Activated T-helper 2 cell treated with anti-CD3 and anti-CD28 coated beads, Interferon-gamma antibody, Interleukin-2, Interleukin-4, amounts not matched to agents 10 μg/mL and 5 μg/mL and 100 μg/mL, durations not matched to agents 14 hours and 24 hours and 36 hours (primary cell): ENCODE measurements at regions of chr18 and their contacts with region 1.

Region 1: GRCh38 chr18:49728542-49728941 is 84.8 kb downstream of the ACAA2 start:
- DNase-seq: peak; percentile 14
- H3K4me3 Mint-ChIP-seq: no peak overlapping the region
- H3K27ac Mint-ChIP-seq: no peak overlapping the region
- H3K4me1 Mint-ChIP-seq: peaks cover 6% of the 10 kb centered on the region
- H3K27me3 Mint-ChIP-seq: peaks cover 9% of the 10 kb centered on the region

Region 2: GRCh38 chr18:49561289-49562193 is 167.0 kb before region 1 on chr18 and contains the start of gene LIPG:
- intact Hi-C with region 1: loop called (anchors 5 kb)
- DNase-seq: peak; percentile 43
- H3K4me3 Mint-ChIP-seq: peak within 1 kb of the TSS; percentile 63
- H3K27ac Mint-ChIP-seq: no peak within 1 kb of the TSS
- H3K4me1 Mint-ChIP-seq: peaks cover 26% of the 10 kb centered on the region
- H3K27me3 Mint-ChIP-seq: peaks cover 71% of the 10 kb centered on the region
- total RNA-seq, gene LIPG: 0.53 and 0.59 TPM in 2 replicates

Region 3: GRCh38 chr18:49690307-49690706 is 38.2 kb before region 1 on chr18:
- intact Hi-C with region 1: loop called (anchors 2 kb)
- DNase-seq: no peak
- H3K4me3 Mint-ChIP-seq: no peak overlapping the region
- H3K27ac Mint-ChIP-seq: no peak overlapping the region
- H3K4me1 Mint-ChIP-seq: peaks cover 19% of the 10 kb centered on the region
- H3K27me3 Mint-ChIP-seq: peaks cover 8% of the 10 kb centered on the region

Region 4: GRCh38 chr18:49701190-49701589 is 27.4 kb before region 1 on chr18:
- intact Hi-C with region 1: no loop called
- DNase-seq: no peak
- H3K4me3 Mint-ChIP-seq: no peak overlapping the region
- H3K27ac Mint-ChIP-seq: no peak overlapping the region
- H3K4me1 Mint-ChIP-seq: no peaks in the 10 kb centered on the region
- H3K27me3 Mint-ChIP-seq: peaks cover 13% of the 10 kb centered on the region

Region 5: GRCh38 chr18:49757513-49758262 is 29.1 kb after region 1 on chr18:
- intact Hi-C with region 1: no loop called
- DNase-seq: no peak
- H3K4me3 Mint-ChIP-seq: no peak overlapping the region
- H3K27ac Mint-ChIP-seq: no peak overlapping the region
- H3K4me1 Mint-ChIP-seq: no peaks in the 10 kb centered on the region
- H3K27me3 Mint-ChIP-seq: peaks cover 13% of the 10 kb centered on the region

Region 6: DNA sequence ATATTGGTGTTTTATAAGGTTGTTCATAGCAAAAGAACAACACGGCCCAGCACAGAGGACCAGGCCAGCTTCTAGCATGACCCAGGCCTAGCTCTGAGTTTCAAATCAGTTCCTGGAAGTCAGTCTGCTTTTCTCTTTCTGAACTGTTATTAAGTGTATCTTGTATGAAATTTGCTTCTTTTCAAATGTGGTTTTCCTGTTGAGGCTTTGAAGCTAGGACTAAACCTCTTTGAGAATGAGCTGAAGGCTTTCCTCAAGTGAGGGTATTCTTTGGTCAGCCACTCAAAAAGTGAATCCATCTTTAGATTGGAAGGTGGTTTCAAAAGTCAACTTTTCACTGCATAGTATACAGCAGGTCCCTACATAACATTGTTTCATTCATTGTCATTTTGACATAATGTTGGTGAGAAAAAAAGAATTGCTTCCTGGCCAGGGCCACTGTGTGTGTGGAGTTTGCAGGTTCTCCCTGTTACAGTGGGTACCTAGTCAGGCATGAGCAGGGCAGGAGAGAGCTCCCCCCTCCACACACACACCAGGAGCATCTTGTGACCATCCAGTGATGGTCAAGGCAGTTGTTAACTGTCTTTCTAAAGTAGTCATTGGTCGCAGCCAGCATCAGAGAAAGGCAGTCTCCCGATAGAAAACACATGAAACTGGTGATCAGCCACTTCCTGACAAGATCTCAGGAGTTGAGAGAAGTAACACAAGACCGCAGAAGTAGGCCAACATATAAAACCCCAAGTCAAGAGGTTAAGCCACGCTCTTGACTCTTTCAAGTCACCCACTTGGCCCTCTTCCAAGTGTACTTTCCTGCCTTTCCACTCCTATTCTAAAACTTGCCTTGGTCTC is 91.5 kb after region 1 on chr18:
- intact Hi-C with region 1: loop called (anchors 2 kb)
- DNase-seq: peak; percentile 47
- H3K4me3 Mint-ChIP-seq: peak overlapping the region; percentile 55
- H3K27ac Mint-ChIP-seq: peak overlapping the region; percentile 87
- H3K4me1 Mint-ChIP-seq: peaks cover 64% of the 10 kb centered on the region
- H3K27me3 Mint-ChIP-seq: no peaks in the 10 kb centered on the region